ENCODE measurements at regions of chr15 and their contacts with region 1.

Region 1: GRCh38 chr15:73353734-73354133 is 15.0 kb downstream of the HCN4 start:
- DNase-seq: no peak
- H3K27ac ChIP-seq: no peak overlapping the region
- CTCF ChIP-seq: no peak

Region 2: DNA sequence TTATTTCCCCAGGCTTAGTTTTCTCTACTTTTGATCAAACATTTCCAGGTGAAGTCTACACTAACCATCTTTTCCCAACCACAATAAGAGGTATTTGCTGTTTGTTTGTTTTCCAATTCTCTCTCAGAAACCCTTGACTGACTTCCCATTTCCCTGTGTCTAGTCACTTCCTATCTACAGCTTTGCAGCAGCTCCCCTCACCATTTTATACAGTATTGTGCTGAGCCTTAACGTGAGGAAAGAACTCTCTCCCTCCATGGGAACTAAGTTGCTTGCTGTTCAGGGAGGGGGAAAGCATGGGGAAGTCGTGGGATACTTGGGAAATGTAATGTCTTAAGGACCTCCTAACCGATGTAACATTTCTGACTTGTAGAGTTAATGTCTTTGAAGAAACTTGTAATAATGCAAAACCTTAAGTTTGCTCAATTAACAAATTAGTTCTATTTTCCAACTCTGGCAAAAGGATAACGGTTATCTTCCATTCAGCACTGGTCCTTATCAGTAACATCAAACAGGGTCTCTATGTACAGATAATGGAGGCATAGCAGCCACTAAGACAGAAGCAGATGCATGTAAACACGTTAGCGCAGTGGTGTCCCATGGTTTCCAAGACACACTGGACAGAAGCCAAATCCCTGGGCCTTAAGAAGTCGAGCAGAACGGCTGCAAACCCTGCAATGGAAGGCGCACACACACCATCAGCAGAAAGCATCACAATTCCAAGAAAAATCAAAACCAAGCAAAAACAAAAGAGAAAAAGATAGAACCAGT is 239.8 kb after region 1 on chr15:
- CTCF ChIA-PET with region 1: no interaction called
- POLR2A ChIA-PET with region 1: interaction called, 14 read pairs
- DNase-seq: no peak
- H3K27ac ChIP-seq: no peak overlapping the region
- CTCF ChIP-seq: no peak